ENCODE measurements at regions of chr7 and their contacts with region 1.

Region 1: DNA sequence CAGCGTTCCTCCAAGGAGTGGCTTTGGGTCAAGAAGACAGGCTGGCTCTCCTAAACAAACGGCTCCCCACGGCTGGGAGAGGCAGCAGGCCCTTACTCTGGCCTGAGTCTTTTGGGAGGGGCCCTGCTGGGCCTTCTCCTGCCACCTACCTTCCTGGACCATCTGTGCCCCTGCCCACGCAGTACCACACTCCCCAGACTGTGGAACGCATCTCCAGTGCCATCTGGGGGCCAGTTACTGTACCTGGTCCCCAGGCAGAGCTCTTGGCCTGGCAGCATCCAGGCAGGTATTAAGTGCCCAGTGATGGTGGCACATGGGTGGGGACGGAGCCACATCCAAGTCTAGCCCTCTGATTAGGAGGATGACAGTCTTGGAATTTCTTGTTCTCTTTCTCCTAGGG is 14.4 kb downstream of the ALKBH4 start:
- DNase-seq: no peak
- H3K4me3 ChIP-seq: no peak overlapping the region
- H3K27ac ChIP-seq: no peak overlapping the region
- H3K4me1 ChIP-seq: peaks cover 9% of the 10 kb centered on the region
- H3K27me3 ChIP-seq: no peaks in the 10 kb centered on the region
- CTCF ChIP-seq: peak in 1 of 2 donors; percentile 28

Region 2: GRCh38 chr7:102404005-102404861 is 46.0 kb before region 1 on chr7:
- CTCF ChIA-PET with region 1: no interaction called
- dilution Hi-C with region 1: no loop called
- in situ Hi-C with region 1: no loop called
- intact Hi-C with region 1: loop called (anchors 2 kb)
- DNase-seq: peak; percentile 33
- H3K4me3 ChIP-seq: no peak overlapping the region
- H3K27ac ChIP-seq: no peak overlapping the region
- H3K4me1 ChIP-seq: no peaks in the 10 kb centered on the region
- H3K27me3 ChIP-seq: no peaks in the 10 kb centered on the region
- CTCF ChIP-seq: peak; percentile 70 to 76

Region 3: DNA sequence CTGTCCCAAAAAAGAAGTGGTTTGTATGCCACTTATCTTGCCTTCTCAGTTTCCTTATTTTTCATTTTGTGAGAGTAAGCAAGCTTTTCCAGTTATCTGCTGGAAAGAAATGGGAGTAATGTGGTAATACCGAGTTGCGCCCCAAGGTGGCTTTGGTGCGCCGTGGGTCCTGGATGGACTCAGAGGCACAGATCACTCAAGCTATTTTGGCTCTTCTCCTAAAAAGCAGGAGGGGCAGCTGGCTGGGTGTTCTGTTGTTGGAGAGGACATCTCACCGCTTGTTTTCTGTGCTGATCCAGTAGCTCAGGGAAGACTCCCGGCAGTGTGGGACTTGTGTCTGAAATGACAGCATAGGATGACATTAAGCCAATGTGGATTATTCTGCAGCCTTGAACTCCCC is 37.7 kb before region 1 on chr7:
- CTCF ChIA-PET with region 1: no interaction called
- dilution Hi-C with region 1: no loop called
- in situ Hi-C with region 1: no loop called
- intact Hi-C with region 1: loop called (anchors 2 kb)
- DNase-seq: no peak
- H3K4me3 ChIP-seq: no peak overlapping the region
- H3K27ac ChIP-seq: no peak overlapping the region
- H3K4me1 ChIP-seq: no peaks in the 10 kb centered on the region
- H3K27me3 ChIP-seq: no peaks in the 10 kb centered on the region
- CTCF ChIP-seq: peak; percentile 50 to 57

Measured in mammary epithelial cell (primary cell).